ENCODE measurements at regions of chr6 and their contacts with region 1.

Region 1: DNA sequence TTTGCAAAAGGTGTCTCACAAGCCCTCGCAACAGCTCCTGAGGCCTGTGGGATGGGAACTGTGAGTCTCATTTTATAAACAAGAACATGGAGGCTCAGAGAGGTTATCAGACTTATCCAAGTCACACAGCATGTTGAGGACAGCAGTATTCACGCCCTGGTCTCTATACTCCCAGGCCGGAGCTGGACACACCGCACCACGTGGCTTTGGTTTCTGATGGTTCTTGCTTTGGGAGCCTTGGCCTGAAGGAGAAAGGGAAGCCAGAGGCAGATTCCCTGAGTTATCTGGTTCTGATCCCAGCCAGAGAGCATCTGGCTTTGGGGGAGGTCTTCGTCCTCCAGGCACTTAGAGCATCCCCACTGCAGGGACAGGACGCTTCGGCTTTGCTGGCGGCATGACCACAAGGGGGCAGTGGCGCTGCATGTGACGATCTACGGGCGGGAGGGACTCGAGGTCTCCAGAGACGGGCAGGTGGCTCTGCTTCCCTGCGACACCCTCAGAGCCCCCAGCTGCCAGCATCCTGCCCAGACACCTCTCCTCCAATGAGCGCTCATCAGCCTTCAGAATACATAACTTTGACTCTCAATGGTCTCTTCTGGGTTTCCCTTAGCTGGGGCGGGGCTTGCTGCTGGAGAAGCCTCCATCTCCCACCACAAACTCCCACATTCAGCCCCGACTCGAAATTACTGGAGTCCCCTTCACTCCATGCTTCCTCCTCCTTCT is 51.4 kb upstream of the SAYSD1 start:
- DNase-seq: peak; percentile 68
- H3K4me3 Mint-ChIP-seq: no peak overlapping the region
- H3K27ac Mint-ChIP-seq: no peak overlapping the region
- H3K4me1 Mint-ChIP-seq: peaks cover 18% of the 10 kb centered on the region
- H3K27me3 Mint-ChIP-seq: peaks cover 2% of the 10 kb centered on the region
- CTCF ChIP-seq: peak; percentile 99

Region 2: GRCh38 chr6:38651121-38651784 is 515.1 kb before region 1 on chr6:
- CTCF ChIA-PET with region 1: no interaction called
- POLR2A ChIA-PET with region 1: no interaction called
- intact Hi-C with region 1: no loop called
- DNase-seq: no peak
- H3K4me3 Mint-ChIP-seq: no peak overlapping the region
- H3K27ac Mint-ChIP-seq: no peak overlapping the region
- H3K4me1 Mint-ChIP-seq: peaks cover 6% of the 10 kb centered on the region
- H3K27me3 Mint-ChIP-seq: no peaks in the 10 kb centered on the region
- CTCF ChIP-seq: no peak

Region 3: GRCh38 chr6:38720295-38720694 is 446.1 kb before region 1 on chr6:
- CTCF ChIA-PET with region 1: no interaction called
- POLR2A ChIA-PET with region 1: no interaction called
- intact Hi-C with region 1: no loop called
- DNase-seq: peak; percentile 19
- H3K4me3 Mint-ChIP-seq: no peak overlapping the region
- H3K27ac Mint-ChIP-seq: no peak overlapping the region
- H3K4me1 Mint-ChIP-seq: peaks cover 15% of the 10 kb centered on the region
- H3K27me3 Mint-ChIP-seq: no peaks in the 10 kb centered on the region
- CTCF ChIP-seq: no peak

Region 4: GRCh38 chr6:38929560-38929959 is 236.8 kb before region 1 on chr6:
- CTCF ChIA-PET with region 1: no interaction called
- POLR2A ChIA-PET with region 1: no interaction called
- intact Hi-C with region 1: no loop called
- DNase-seq: no peak
- H3K4me3 Mint-ChIP-seq: no peak overlapping the region
- H3K27ac Mint-ChIP-seq: no peak overlapping the region
- H3K4me1 Mint-ChIP-seq: no peaks in the 10 kb centered on the region
- H3K27me3 Mint-ChIP-seq: peaks cover 46% of the 10 kb centered on the region
- CTCF ChIP-seq: no peak

Region 5: DNA sequence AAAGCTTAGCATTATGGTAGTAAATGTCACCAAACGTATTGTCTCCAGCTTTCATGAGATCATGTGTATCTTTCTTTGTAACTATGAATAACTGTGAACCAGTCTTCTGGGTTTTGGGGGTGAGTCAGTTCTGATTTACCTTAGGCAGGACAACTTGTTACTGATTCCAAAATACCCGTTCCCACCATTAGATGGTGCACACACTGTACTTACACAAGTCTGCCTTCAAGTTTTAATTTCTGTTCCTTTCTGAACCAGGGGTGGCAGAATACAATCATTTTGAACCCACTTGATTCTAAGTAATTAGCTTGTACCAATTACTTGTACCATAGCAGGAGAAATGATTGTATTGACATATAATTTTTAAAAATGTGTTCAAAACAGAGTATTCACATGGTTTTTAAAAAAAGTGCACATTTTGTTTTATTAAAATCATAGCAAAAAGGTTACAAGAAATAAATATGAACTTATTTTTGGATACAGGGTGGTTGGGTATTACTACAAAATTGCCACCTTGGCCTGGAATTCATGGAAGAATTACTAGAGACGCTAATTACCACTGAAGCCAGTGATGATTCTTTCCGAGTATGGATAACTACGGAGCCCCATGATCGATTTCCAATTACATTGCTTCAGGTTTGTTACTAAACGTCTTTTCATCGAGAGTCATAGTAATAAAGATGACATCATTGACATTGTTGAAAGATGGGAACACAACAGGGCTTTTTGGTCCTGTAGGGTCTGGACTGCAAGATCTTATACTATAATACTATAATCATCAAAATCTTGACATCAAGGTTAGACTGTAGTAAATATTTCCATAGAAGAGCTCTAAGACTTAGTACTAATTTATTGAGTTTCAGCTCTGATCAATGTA is 192.9 kb before region 1 on chr6:
- CTCF ChIA-PET with region 1: interaction called, 22 read pairs
- POLR2A ChIA-PET with region 1: no interaction called
- intact Hi-C with region 1: loop called (anchors 5 kb)
- DNase-seq: peak; percentile 67
- H3K4me3 Mint-ChIP-seq: no peak overlapping the region
- H3K27ac Mint-ChIP-seq: no peak overlapping the region
- H3K4me1 Mint-ChIP-seq: peaks cover 5% of the 10 kb centered on the region
- H3K27me3 Mint-ChIP-seq: peaks cover 72% of the 10 kb centered on the region
- CTCF ChIP-seq: peak; percentile 76

Region 6: DNA sequence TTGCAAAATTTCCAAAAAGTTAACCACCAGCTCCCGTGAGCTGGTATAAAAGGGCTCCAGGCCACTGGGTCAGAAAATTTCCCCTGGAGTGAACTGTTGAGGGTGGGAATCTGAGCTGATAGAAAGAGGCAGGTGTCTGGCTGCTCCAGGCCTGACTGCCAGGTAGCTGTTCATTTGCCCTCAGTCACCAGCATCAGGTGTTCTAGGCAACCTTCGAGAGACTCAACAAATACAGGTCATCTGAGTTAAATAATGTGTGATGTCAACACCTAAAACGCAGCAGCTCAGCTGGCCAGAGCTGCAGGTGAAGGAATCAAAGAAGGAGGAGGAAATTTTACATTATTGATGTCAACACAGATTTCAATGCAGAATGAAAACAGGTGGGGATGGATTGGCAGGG is 16.3 kb after region 1 on chr6:
- CTCF ChIA-PET with region 1: interaction called, 36 read pairs
- POLR2A ChIA-PET with region 1: interaction called, 4 read pairs
- intact Hi-C with region 1: no loop called
- DNase-seq: no peak
- H3K4me3 Mint-ChIP-seq: no peak overlapping the region
- H3K27ac Mint-ChIP-seq: no peak overlapping the region
- H3K4me1 Mint-ChIP-seq: peaks cover 40% of the 10 kb centered on the region
- H3K27me3 Mint-ChIP-seq: no peaks in the 10 kb centered on the region
- CTCF ChIP-seq: no peak

Region 7: DNA sequence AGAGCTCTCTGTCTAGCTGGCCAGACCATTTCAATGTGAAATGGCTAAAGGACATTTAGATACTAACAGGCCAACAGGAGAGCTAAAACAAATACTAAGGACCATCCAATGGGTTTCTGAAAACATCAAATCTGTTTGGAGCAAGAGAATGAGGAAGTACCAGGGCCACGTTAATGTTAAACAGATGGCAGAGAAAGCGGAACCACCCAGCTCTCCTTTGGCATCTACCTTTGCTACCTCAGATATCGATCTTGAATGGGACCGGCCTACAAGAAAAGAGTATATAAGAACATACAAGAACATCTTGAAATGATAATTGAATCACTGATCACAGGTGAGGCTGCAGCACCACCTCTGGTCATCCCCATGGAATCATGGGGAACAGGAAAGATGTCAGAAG is 31.2 kb after region 1 on chr6:
- CTCF ChIA-PET with region 1: interaction called, 11 read pairs
- POLR2A ChIA-PET with region 1: no interaction called
- intact Hi-C with region 1: no loop called
- DNase-seq: no peak
- H3K4me3 Mint-ChIP-seq: no peak overlapping the region
- H3K27ac Mint-ChIP-seq: no peak overlapping the region
- H3K4me1 Mint-ChIP-seq: peaks cover 10% of the 10 kb centered on the region
- H3K27me3 Mint-ChIP-seq: no peaks in the 10 kb centered on the region
- CTCF ChIP-seq: no peak

Region 8: DNA sequence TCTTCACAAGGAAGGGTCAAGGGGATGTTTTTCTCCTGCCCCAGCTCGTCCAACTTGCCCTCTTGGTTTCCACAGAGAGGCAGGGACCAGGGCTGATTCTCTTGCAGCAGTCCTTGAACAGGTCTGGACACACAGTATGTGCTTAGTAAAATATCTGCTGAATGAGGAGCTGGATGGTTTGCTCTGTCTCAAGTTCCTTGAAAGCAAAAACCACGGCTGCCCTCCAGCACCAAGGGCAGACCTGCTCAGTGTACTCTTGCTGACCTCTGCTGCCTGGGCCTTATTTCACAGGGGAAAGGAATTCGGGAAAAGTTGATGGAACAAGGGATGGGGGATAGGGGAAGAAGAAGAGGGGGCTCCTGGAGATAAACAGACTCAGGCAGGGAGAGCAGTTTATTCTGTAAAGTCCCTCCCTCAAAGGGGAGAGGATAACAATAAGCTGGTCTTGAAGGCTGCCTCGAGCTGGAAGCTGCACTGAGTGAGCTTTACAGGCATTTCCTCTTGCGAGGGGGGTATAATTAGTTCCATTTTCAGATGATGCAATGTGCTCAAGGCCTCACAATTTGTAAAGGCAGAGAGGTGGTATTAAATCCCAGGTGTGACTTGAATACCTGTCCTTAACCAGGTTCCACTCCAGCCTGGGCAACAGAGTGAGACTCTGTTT is 52.7 kb after region 1 on chr6:
- CTCF ChIA-PET with region 1: interaction called, 50 read pairs
- POLR2A ChIA-PET with region 1: interaction called, 3 read pairs
- intact Hi-C with region 1: loop called (anchors 5 kb)
- DNase-seq: peak; percentile 22
- H3K4me3 Mint-ChIP-seq: no peak overlapping the region
- H3K27ac Mint-ChIP-seq: no peak overlapping the region
- H3K4me1 Mint-ChIP-seq: peaks cover 16% of the 10 kb centered on the region
- H3K27me3 Mint-ChIP-seq: no peaks in the 10 kb centered on the region
- CTCF ChIP-seq: no peak

Region 9: DNA sequence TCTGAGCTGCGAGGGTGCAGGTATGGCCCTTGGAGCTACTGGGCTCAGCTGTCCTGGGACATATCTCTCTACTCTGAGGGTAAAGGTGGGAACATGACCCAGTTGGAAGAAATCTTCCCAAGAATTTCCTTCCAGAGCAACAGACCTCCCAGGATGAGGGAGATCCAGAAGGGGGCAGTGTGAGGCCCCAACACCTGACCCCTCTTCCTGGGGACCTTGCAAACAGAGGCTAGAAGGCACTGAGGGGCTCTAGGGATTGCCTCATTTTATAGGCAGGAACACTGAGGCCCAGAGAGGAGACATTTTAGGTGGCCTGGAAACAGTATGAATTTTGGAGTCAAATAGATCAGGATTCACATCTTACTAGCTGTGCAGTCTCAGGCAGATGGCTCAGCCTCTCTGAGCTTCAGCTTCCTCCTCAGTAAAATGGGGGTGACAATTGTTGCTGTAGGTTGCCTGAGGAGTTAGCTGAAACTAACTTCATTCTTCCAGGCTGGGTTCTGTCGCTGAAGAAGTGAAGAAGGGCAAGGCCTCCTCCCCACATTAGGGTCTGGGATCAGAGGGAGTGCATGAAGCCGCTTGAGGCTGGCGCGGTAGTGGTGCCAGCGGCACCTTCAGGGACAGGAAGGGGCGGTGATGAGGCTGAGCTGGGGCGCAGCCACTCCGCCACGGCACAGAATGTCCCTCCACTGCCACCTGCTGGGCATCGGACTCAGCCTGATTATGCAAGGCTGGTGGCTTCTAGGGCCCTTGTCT is 136.5 kb after region 1 on chr6:
- CTCF ChIA-PET with region 1: interaction called, 625 read pairs
- POLR2A ChIA-PET with region 1: interaction called, 24 read pairs
- intact Hi-C with region 1: loop called (anchors 1 kb)
- DNase-seq: peak; percentile 82
- H3K4me3 Mint-ChIP-seq: no peak overlapping the region
- H3K27ac Mint-ChIP-seq: no peak overlapping the region
- H3K4me1 Mint-ChIP-seq: no peaks in the 10 kb centered on the region
- H3K27me3 Mint-ChIP-seq: no peaks in the 10 kb centered on the region
- CTCF ChIP-seq: peak; percentile 94

Measured in MCF 10A (cell line).